Mammary epithelial cell (primary cell): ENCODE measurements at regions of chr3 and their contacts with region 1.

Region 1: DNA sequence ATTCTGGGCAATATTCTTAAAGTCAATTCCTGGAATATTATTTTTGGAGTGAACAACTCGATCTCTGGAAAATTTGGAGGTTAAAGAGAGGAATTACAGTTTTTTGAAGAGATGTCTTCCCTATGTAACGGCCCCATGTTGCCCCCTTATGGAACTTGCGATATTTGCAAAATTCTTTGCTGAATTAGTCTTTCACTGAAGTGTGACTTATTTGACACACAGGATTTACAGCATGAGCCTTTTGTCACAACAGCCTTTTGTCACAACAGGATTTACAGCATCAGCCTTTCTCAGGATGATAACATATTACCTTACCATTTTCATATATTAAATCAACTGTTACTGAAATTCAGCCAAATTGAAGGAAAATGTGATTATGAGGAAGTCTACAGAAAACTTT is 37.8 kb upstream of the SPTSSB start:
- DNase-seq: peak; percentile 57
- H3K4me3 ChIP-seq: no peak overlapping the region
- H3K27ac ChIP-seq: peak overlapping the region; percentile 44
- H3K4me1 ChIP-seq: peaks cover 36% of the 10 kb centered on the region
- H3K27me3 ChIP-seq: no peaks in the 10 kb centered on the region
- CTCF ChIP-seq: peak; percentile 69 to 72

Region 2: DNA sequence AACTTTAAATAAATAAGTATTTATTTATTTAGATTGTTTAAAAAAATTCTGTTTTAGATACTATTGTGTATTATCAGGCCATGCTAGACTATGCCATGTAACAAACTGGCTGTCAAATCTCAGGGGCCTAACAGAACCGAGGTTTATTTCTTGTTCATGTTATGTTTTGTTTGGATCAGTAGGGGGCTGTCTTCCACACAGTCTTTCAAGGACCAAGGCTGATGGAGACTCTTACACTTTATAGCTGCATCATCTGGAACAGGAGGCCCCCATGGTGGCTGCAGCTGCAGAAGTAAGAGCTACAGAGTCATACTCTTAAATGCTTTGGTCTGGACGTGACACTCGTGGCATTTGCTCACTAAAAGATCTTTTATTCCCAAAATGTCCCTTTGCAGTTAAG is 765.1 kb before region 1 on chr3:
- CTCF ChIA-PET with region 1: no interaction called
- dilution Hi-C with region 1: no loop called
- in situ Hi-C with region 1: no loop called
- intact Hi-C with region 1: no loop called
- DNase-seq: no peak
- H3K4me3 ChIP-seq: no peak overlapping the region
- H3K27ac ChIP-seq: no peak overlapping the region
- H3K4me1 ChIP-seq: no peaks in the 10 kb centered on the region
- H3K27me3 ChIP-seq: no peaks in the 10 kb centered on the region
- CTCF ChIP-seq: peak; percentile 28 to 45

Region 3: DNA sequence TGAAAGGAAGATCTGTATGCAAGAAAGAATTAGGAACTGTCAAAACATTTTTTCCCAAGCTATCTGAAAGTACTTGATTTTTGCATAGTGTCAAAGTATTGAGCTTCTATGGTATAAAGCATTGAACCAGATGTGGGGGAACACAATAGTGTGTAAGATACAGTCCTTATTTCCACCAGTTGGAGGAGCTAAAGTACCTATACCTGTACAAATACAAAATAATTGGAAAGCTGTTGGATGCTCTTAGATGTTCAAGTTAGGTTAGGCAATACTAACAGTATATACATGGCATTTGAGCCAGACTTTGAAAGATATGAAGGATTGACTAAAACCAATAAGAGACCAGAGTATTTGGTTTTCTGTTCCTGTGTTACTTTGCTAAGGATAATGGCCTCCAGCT is 452.3 kb before region 1 on chr3:
- CTCF ChIA-PET with region 1: no interaction called
- dilution Hi-C with region 1: no loop called
- in situ Hi-C with region 1: no loop called
- intact Hi-C with region 1: loop called (anchors 5 kb)
- DNase-seq: peak; percentile 24
- H3K4me3 ChIP-seq: no peak overlapping the region
- H3K27ac ChIP-seq: no peak overlapping the region
- H3K4me1 ChIP-seq: no peaks in the 10 kb centered on the region
- H3K27me3 ChIP-seq: peaks cover 3% of the 10 kb centered on the region
- CTCF ChIP-seq: peak; percentile 43 to 54

Region 4: GRCh38 chr3:161096771-161097355 is 312.2 kb before region 1 on chr3:
- CTCF ChIA-PET with region 1: no interaction called
- dilution Hi-C with region 1: no loop called
- in situ Hi-C with region 1: no loop called
- intact Hi-C with region 1: loop called (anchors 1 kb)
- DNase-seq: peak; percentile 11
- H3K4me3 ChIP-seq: no peak overlapping the region
- H3K27ac ChIP-seq: no peak overlapping the region
- H3K4me1 ChIP-seq: no peaks in the 10 kb centered on the region
- H3K27me3 ChIP-seq: no peaks in the 10 kb centered on the region
- CTCF ChIP-seq: peak; percentile 26 to 61

Region 5: GRCh38 chr3:161274719-161275298 is 134.3 kb before region 1 on chr3:
- CTCF ChIA-PET with region 1: no interaction called
- dilution Hi-C with region 1: no loop called
- in situ Hi-C with region 1: loop called (anchors 5 to 10 kb)
- intact Hi-C with region 1: loop called (anchors 1 kb)
- DNase-seq: peak; percentile 55
- H3K4me3 ChIP-seq: no peak overlapping the region
- H3K27ac ChIP-seq: no peak overlapping the region
- H3K4me1 ChIP-seq: peaks cover 5% of the 10 kb centered on the region
- H3K27me3 ChIP-seq: no peaks in the 10 kb centered on the region
- CTCF ChIP-seq: peak; percentile 66 to 80

Region 6: GRCh38 chr3:161284989-161285388 is 124.1 kb before region 1 on chr3:
- CTCF ChIA-PET with region 1: no interaction called
- dilution Hi-C with region 1: no loop called
- in situ Hi-C with region 1: loop called in 1 of 2 experiments (anchors 5 kb)
- intact Hi-C with region 1: no loop called
- DNase-seq: peak; percentile 94
- H3K4me3 ChIP-seq: no peak overlapping the region
- H3K27ac ChIP-seq: no peak overlapping the region
- H3K4me1 ChIP-seq: peaks cover 14% of the 10 kb centered on the region
- H3K27me3 ChIP-seq: no peaks in the 10 kb centered on the region
- CTCF ChIP-seq: no peak

Region 7: GRCh38 chr3:161305095-161305991 is 103.7 kb before region 1 on chr3:
- CTCF ChIA-PET with region 1: no interaction called
- dilution Hi-C with region 1: no loop called
- in situ Hi-C with region 1: no loop called
- intact Hi-C with region 1: loop called (anchors 1 kb)
- DNase-seq: peak; percentile 4
- H3K4me3 ChIP-seq: no peak overlapping the region
- H3K27ac ChIP-seq: no peak overlapping the region
- H3K4me1 ChIP-seq: no peaks in the 10 kb centered on the region
- H3K27me3 ChIP-seq: no peaks in the 10 kb centered on the region
- CTCF ChIP-seq: peak; percentile 80 to 82

Region 8: GRCh38 chr3:161349529-161350278 is 59.4 kb before region 1 on chr3:
- CTCF ChIA-PET with region 1: no interaction called
- dilution Hi-C with region 1: no loop called
- in situ Hi-C with region 1: no loop called
- intact Hi-C with region 1: loop called (anchors 5 kb)
- DNase-seq: peak; percentile 98
- H3K4me3 ChIP-seq: no peak overlapping the region
- H3K27ac ChIP-seq: no peak overlapping the region
- H3K4me1 ChIP-seq: peaks cover 25% of the 10 kb centered on the region
- H3K27me3 ChIP-seq: no peaks in the 10 kb centered on the region
- CTCF ChIP-seq: no peak

Region 9: GRCh38 chr3:161500068-161500796 is 91.2 kb after region 1 on chr3:
- CTCF ChIA-PET with region 1: no interaction called
- dilution Hi-C with region 1: no loop called
- in situ Hi-C with region 1: no loop called
- intact Hi-C with region 1: no loop called
- DNase-seq: no peak
- H3K4me3 ChIP-seq: no peak overlapping the region
- H3K27ac ChIP-seq: no peak overlapping the region
- H3K4me1 ChIP-seq: no peaks in the 10 kb centered on the region
- H3K27me3 ChIP-seq: no peaks in the 10 kb centered on the region
- CTCF ChIP-seq: no peak